Calu3 (cell line): ENCODE measurements at regions of chr21 and their contacts with region 1.

Region 1: DNA sequence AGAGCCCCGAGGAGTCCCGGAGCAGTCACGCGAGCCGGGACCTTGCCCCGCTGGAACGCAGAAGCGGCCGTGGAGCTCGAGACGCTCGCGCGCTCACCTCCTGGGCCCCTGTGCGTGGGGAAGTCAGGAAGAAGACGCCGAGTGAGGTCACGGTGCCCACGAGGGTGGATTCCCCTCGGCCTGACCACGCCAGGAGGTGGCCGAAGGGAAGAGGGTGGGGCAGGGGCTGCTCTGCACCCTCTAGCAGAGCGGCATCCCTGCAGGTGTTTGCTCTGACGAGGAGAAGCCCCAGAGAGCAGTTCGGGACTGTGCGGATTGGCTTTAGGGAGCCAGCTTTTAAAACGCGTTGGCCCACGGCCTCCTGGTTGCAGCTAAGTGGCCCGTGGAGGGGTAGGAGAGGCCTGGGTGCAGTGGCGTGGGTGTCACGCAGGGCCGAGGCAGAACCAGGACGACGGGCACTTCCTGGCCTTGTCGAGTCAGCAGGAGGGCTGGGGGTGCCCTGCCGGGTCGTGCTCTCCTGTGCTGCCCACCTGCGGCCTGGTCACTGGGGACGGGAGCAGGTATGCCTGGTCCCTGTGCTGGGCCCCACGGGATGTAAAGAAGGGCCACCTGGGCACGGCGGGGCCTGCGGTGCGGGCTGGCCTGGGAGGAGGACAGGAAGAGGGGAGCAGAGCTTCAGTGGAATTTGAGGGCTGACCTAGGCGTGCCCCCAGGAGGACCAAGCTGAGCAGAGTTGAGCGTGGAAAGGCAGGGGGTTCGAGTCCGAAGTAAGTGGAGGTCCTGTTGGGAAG is 1.0 kb downstream of the PDXK start:
- DNase-seq: no peak
- H3K4me3 Mint-ChIP-seq: peak overlapping the region; percentile 92
- H3K27ac Mint-ChIP-seq: no peak overlapping the region
- H3K4me1 Mint-ChIP-seq: peaks cover 19% of the 10 kb centered on the region
- H3K27me3 Mint-ChIP-seq: no peaks in the 10 kb centered on the region
- CTCF ChIP-seq: no peak

Region 2: DNA sequence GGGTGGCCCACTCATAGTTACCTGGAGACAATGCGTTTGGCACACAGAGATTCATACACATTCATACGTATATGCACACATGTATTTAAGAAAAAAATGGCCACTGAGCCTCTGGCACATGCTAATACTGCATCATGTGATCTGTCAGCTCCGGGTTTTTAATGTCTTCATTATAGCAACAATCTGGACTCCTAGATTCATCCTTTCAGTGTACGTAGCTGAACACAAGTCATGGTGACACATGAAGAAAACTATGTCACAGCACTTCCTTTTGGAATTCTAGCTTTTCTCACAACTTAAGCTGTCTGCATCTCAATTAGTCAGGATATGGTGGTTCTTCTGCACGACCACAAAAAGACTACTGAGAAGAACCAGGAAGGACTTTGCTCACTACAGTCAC is 85.3 kb before region 1 on chr21:
- CTCF ChIA-PET with region 1: no interaction called
- intact Hi-C with region 1: no loop called
- DNase-seq: no peak
- H3K4me3 Mint-ChIP-seq: no peak overlapping the region
- H3K27ac Mint-ChIP-seq: no peak overlapping the region
- H3K4me1 Mint-ChIP-seq: peaks cover 19% of the 10 kb centered on the region
- H3K27me3 Mint-ChIP-seq: no peaks in the 10 kb centered on the region
- CTCF ChIP-seq: no peak

Region 3: GRCh38 chr21:43659136-43660000 is 60.6 kb before region 1 on chr21 and contains the starts of genes HSF2BP and RRP1B:
- CTCF ChIA-PET with region 1: interaction called, 3 read pairs
- intact Hi-C with region 1: loop called (anchors 2 kb)
- DNase-seq: peak; percentile 81
- H3K4me3 Mint-ChIP-seq: peak within 1 kb of the TSS; percentile 88
- H3K27ac Mint-ChIP-seq: peak within 1 kb of the TSS; percentile 69
- H3K4me1 Mint-ChIP-seq: peaks cover 20% of the 10 kb centered on the region
- H3K27me3 Mint-ChIP-seq: no peaks in the 10 kb centered on the region
- CTCF ChIP-seq: no peak
- total RNA-seq, gene HSF2BP: 0.95 and 1.5 TPM in 2 replicates
- total RNA-seq, gene RRP1B: 24.6 and 26.0 TPM in 2 replicates

Region 4: DNA sequence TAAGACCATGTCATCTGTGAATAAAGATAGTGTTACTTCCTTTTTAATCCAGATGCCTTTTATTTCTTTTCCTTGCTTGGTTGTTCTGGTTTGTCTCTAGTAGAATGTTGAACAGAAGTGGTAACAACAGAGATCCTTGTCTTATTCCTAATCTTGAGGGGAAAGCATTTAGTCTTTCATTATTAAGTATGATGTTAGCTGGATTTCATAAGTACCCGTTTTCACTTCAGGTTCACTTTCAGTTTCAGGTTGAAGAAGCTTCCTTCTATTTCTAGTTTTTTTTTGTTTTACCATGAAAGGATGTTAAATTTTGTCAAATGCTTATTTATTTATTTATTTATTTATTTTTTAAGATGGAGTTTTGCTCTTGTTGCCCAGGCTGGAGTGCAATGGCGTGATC is 122.8 kb after region 1 on chr21:
- CTCF ChIA-PET with region 1: no interaction called
- intact Hi-C with region 1: no loop called
- DNase-seq: no peak
- H3K4me3 Mint-ChIP-seq: no peak overlapping the region
- H3K27ac Mint-ChIP-seq: no peak overlapping the region
- H3K4me1 Mint-ChIP-seq: no peaks in the 10 kb centered on the region
- H3K27me3 Mint-ChIP-seq: peaks cover 7% of the 10 kb centered on the region
- CTCF ChIP-seq: no peak